Calu3 (cell line): ENCODE measurements at regions of chr7 and their contacts with region 1.

Region 1: GRCh38 chr7:125061776-125062397 is 132.3 kb upstream of the POT1 start:
- DNase-seq: no peak
- H3K4me3 Mint-ChIP-seq: peak overlapping the region; percentile 29
- H3K27ac Mint-ChIP-seq: peak overlapping the region; percentile 52
- H3K4me1 Mint-ChIP-seq: peaks cover 26% of the 10 kb centered on the region
- H3K27me3 Mint-ChIP-seq: no peaks in the 10 kb centered on the region
- CTCF ChIP-seq: no peak

Region 2: DNA sequence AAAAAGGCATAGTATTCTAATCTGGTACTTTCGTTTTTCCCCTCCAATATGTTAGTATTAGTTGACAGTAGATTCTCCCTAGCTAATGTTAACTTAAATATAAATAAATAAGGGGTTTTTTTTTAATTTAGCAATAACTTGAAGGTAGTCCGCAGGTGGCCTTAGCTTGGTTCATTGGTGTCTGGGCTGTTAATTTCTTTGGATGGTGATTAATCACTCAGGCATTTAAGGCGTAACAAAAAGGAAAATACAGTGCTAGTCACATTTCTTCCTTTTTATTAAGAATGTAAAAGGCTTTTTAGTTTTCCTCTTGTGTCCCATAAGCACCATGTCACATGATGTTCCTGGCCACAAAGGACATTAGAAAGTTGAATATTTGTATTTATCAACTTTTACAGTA is 28.7 kb after region 1 on chr7:
- CTCF ChIA-PET with region 1: no interaction called
- intact Hi-C with region 1: no loop called
- DNase-seq: peak; percentile 9
- H3K4me3 Mint-ChIP-seq: no peak overlapping the region
- H3K27ac Mint-ChIP-seq: no peak overlapping the region
- H3K4me1 Mint-ChIP-seq: peaks cover 24% of the 10 kb centered on the region
- H3K27me3 Mint-ChIP-seq: no peaks in the 10 kb centered on the region
- CTCF ChIP-seq: no peak

Region 3: DNA sequence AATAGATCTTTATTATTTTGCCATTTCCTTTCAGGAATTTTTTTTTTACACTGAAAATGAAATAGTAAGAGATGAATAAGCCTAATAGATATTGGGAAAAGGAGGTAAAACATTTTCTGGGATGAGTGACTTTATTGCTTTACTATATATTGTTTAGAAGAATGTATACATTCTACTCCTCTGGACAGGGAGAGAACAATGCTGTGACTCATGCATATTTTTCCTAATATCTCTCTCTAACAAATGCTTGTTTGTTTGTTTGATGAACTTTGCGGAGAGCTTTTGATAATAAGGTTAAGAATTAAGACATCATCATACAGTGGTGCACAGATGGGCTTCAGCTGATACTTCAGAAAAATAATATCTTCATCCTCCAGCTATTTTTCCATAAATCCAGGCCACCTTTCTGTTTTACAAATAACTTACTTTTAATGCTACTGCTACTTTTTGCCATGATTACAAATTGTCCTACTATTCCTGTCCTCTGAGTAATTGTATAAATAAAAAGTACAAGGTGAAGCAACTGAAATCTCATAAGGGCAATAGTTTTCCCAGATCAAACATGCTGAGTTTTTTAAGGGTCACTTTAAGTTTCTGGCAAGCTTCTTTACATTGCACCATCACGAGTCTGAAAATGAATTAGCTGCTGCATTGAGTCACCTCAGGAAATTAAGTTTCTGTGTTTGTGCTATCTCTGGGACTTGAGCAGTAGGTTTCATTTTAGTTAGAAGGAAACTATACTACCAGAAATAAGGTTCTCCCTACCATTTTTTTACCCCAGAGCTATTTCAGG is 75.1 kb after region 1 on chr7:
- CTCF ChIA-PET with region 1: no interaction called
- intact Hi-C with region 1: loop called (anchors 2 kb)
- DNase-seq: peak; percentile 5
- H3K4me3 Mint-ChIP-seq: peak overlapping the region; percentile 21
- H3K27ac Mint-ChIP-seq: peak overlapping the region; percentile 81
- H3K4me1 Mint-ChIP-seq: peaks cover 24% of the 10 kb centered on the region
- H3K27me3 Mint-ChIP-seq: no peaks in the 10 kb centered on the region
- CTCF ChIP-seq: no peak

Region 4: GRCh38 chr7:125316466-125316865 is 254.6 kb after region 1 on chr7:
- CTCF ChIA-PET with region 1: interaction called, 25 read pairs
- intact Hi-C with region 1: loop called (anchors 1 kb)
- DNase-seq: peak; percentile 65
- H3K4me3 Mint-ChIP-seq: no peak overlapping the region
- H3K27ac Mint-ChIP-seq: no peak overlapping the region
- H3K4me1 Mint-ChIP-seq: peaks cover 11% of the 10 kb centered on the region
- H3K27me3 Mint-ChIP-seq: no peaks in the 10 kb centered on the region
- CTCF ChIP-seq: peak; percentile 40

Region 5: GRCh38 chr7:125670926-125671572 is 609.2 kb after region 1 on chr7:
- CTCF ChIA-PET with region 1: no interaction called
- intact Hi-C with region 1: loop called (anchors 1 kb)
- DNase-seq: no peak
- H3K4me3 Mint-ChIP-seq: no peak overlapping the region
- H3K27ac Mint-ChIP-seq: no peak overlapping the region
- H3K4me1 Mint-ChIP-seq: no peaks in the 10 kb centered on the region
- H3K27me3 Mint-ChIP-seq: no peaks in the 10 kb centered on the region
- CTCF ChIP-seq: peak; percentile 61

Region 6: GRCh38 chr7:126424985-126425384 is 1363.1 kb after region 1 on chr7:
- CTCF ChIA-PET with region 1: no interaction called
- intact Hi-C with region 1: loop called (anchors 5 kb)
- DNase-seq: no peak
- H3K4me3 Mint-ChIP-seq: no peak overlapping the region
- H3K27ac Mint-ChIP-seq: no peak overlapping the region
- H3K4me1 Mint-ChIP-seq: no peaks in the 10 kb centered on the region
- H3K27me3 Mint-ChIP-seq: no peaks in the 10 kb centered on the region
- CTCF ChIP-seq: no peak